GM12878 (cell line): ENCODE measurements at regions of chr2 and their contacts with region 1.

Region 1: DNA sequence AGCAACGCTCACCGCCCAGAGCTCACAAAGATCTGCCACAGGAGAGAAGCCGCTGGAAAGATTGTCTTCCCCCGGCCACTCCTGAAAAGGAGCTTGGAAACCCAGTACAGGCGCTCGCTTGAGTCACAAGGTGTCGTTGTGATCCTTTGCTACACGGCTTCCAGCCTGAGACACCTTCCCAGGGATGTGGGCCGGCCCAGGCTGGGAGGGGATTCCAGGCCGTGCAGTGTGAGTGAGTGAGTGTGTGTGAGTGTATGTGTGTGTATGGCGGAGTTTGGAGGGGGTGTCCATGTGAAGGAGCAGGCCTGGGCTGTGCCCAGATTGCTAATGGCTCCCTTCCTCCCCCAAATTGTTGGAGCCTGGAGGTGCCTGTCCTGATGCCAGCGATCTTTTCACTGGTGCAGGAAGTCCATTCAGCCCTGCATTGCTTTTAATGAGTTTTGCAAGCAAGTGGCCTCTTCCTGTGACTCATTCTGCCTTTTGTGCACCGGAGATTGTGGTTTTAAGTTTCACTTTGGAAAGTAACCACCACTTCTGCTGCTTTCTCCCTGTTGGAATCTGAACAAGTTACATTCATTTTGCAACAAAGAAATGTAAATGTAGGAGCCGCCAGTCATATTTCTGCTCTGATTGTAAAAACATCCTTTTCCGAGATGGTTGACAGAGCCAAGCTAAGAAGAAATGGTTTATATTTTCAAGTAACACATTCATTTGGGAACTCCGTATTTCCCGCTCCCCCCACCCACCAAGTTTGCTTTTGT is 83.7 kb downstream of the LPIN1 start:
- DNase-seq: peak; percentile 96
- ATAC-seq: peak; percentile 84
- H3K4me3 ChIP-seq: peak overlapping the region; percentile 38; the same call in 1 of the 2 replicates
- H3K27ac ChIP-seq: peak overlapping the region; percentile 78
- H3K4me1 ChIP-seq: peaks cover 27% of the 10 kb centered on the region
- H3K27me3 ChIP-seq: 0 out of 4 replicates have a peak, but pooled peaks cover 0 to 2% of the 10 kb centered on the region in 2 experiments
- CTCF ChIP-seq: peak in 2 of 3 experiments; percentile 7 to 58; a peak in 3 of 6 replicates
- EP300 ChIP-seq: peak; percentile 88 to 97; a peak in 3 of 4 replicates
- POLR2A ChIP-seq: no peak
- RAD21 ChIP-seq: peak; percentile 54

Region 2: DNA sequence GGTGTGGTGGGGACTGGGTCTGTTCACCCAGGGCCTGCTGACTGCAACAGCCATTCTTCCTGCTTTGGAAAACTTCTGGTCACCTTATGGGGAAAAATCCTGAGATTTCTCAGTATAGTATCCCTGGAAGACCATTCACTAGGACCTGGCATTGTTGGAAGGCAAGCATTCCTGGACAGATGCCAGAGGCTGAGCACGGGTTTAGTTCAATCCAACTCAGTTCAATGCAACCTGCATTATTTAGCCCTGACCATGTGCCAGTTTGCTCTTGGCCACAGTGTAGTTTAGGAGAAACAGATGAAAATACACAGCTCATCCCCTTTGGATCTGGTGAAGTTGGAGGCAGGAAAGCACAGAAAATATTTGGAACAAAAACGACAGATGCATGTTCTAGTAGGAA is 12.2 kb after region 1 on chr2:
- CTCF ChIA-PET with region 1: interaction called, 3 read pairs
- POLR2A ChIA-PET with region 1: no interaction called
- RAD21 ChIA-PET with region 1: interaction called, 11 read pairs
- SMC1A ChIA-PET with region 1: interaction called, 6 read pairs
- in situ Hi-C with region 1: no loop called
- intact Hi-C with region 1: no loop called
- DNase-seq: no peak
- ATAC-seq: no peak
- H3K4me3 ChIP-seq: no peak overlapping the region
- H3K27ac ChIP-seq: no peak overlapping the region
- H3K4me1 ChIP-seq: no peaks in the 10 kb centered on the region
- H3K27me3 ChIP-seq: 0 out of 4 replicates have a peak, but pooled peaks cover 0 to 2% of the 10 kb centered on the region in 2 experiments
- CTCF ChIP-seq: no peak
- EP300 ChIP-seq: no peak
- POLR2A ChIP-seq: no peak
- RAD21 ChIP-seq: no peak

Region 3: GRCh38 chr2:11852526-11853196 is 22.5 kb after region 1 on chr2:
- CTCF ChIA-PET with region 1: no interaction called
- POLR2A ChIA-PET with region 1: no interaction called
- RAD21 ChIA-PET with region 1: no interaction called
- SMC1A ChIA-PET with region 1: no interaction called
- in situ Hi-C with region 1: no loop called
- intact Hi-C with region 1: no loop called
- DNase-seq: no peak
- ATAC-seq: no peak; the same call in 2 of the 3 replicates
- H3K4me3 ChIP-seq: no peak overlapping the region
- H3K27ac ChIP-seq: no peak overlapping the region
- H3K4me1 ChIP-seq: peaks cover 7% of the 10 kb centered on the region
- H3K27me3 ChIP-seq: no peaks in the 10 kb centered on the region
- CTCF ChIP-seq: no peak
- EP300 ChIP-seq: no peak
- POLR2A ChIP-seq: no peak
- RAD21 ChIP-seq: no peak

Region 4: GRCh38 chr2:12044857-12045256 is 214.7 kb after region 1 on chr2:
- CTCF ChIA-PET with region 1: interaction called, 4 read pairs
- POLR2A ChIA-PET with region 1: interaction called, 5 read pairs
- RAD21 ChIA-PET with region 1: interaction called, 8 read pairs
- SMC1A ChIA-PET with region 1: interaction called, 3 read pairs
- in situ Hi-C with region 1: no loop called
- intact Hi-C with region 1: loop called (anchors 5 kb)
- DNase-seq: peak; percentile 83
- ATAC-seq: peak; percentile 83
- H3K4me3 ChIP-seq: peak overlapping the region; percentile 34; the same call in 1 of the 2 replicates
- H3K27ac ChIP-seq: peak overlapping the region; percentile 75
- H3K4me1 ChIP-seq: peaks cover 44% of the 10 kb centered on the region
- H3K27me3 ChIP-seq: no peaks in the 10 kb centered on the region
- CTCF ChIP-seq: peak in 1 of 3 experiments; percentile 24; a peak in 1 of 6 replicates
- EP300 ChIP-seq: 0 out of 4 replicates have a peak, but pooled peaks of 1 of the 2 experiments have one; percentile 15
- POLR2A ChIP-seq: no peak
- RAD21 ChIP-seq: no peak

Region 5: GRCh38 chr2:12282780-12283695 is 452.9 kb after region 1 on chr2:
- CTCF ChIA-PET with region 1: interaction called, 6 read pairs
- POLR2A ChIA-PET with region 1: no interaction called
- RAD21 ChIA-PET with region 1: no interaction called
- SMC1A ChIA-PET with region 1: no interaction called
- in situ Hi-C with region 1: loop called (anchors 25 kb)
- intact Hi-C with region 1: loop called (anchors 5 kb)
- DNase-seq: no peak
- ATAC-seq: peak; percentile 95
- H3K4me3 ChIP-seq: 0 out of 2 replicates have a peak overlapping the region, but pooled peaks have one; percentile 22
- H3K27ac ChIP-seq: no peak overlapping the region; the same call in 1 of the 2 replicates
- H3K4me1 ChIP-seq: peaks cover 16% of the 10 kb centered on the region
- H3K27me3 ChIP-seq: no peaks in the 10 kb centered on the region
- CTCF ChIP-seq: no peak
- EP300 ChIP-seq: peak in 1 of 2 experiments; percentile 46; a peak in 1 of 4 replicates
- POLR2A ChIP-seq: no peak
- RAD21 ChIP-seq: no peak

Region 6: GRCh38 chr2:12587729-12588522 is 757.8 kb after region 1 on chr2:
- CTCF ChIA-PET with region 1: no interaction called
- POLR2A ChIA-PET with region 1: no interaction called
- RAD21 ChIA-PET with region 1: interaction called, 4 read pairs
- SMC1A ChIA-PET with region 1: interaction called, 3 read pairs
- in situ Hi-C with region 1: no loop called
- intact Hi-C with region 1: loop called (anchors 10 kb)
- DNase-seq: peak; percentile 49
- ATAC-seq: peak; percentile 89
- H3K4me3 ChIP-seq: no peak overlapping the region
- H3K27ac ChIP-seq: no peak overlapping the region
- H3K4me1 ChIP-seq: peaks cover 19% of the 10 kb centered on the region
- H3K27me3 ChIP-seq: no peaks in the 10 kb centered on the region
- CTCF ChIP-seq: no peak
- EP300 ChIP-seq: 0 out of 4 replicates have a peak, but pooled peaks of 1 of the 2 experiments have one; percentile 51
- POLR2A ChIP-seq: no peak
- RAD21 ChIP-seq: no peak

Region 7: DNA sequence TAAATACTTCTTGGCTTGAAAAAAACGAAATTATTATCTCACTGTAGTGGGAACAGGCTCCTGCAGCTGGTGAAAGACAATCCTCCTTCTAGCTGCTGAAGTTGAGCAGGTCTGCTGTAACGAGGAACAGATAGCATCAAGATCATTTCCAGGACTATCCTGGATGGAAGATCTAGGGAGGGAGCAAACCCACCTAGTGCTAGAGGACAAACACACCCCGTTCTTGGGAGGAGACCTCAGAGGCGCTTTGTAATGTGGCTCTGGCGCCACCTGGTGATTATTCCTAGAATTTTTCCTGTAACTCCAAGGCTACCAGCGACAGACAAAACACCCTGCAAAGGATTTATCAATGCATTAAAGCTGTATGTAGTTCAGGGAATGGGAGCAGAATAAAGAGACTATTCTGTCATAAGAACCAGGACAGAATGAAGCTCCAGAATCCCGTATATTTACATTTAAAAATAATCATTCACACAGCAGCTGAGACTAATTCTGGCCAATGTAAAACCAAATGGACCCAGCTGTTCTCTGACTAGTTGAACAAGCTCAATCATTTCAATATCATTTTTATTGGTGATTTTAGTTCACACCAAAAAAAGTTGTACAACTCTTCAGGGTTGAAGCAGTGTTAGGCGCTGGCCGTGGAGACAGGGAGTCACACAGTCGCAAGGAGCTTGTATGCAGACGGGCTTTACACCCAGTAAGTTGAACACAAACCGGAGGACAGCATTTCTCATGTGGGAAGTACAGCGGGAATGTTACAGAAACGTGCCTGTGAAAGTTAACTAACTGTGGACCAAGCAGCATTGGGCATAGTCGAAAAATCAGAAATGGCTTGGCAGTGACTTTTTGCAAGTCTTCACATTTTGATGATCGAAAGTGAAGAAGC is 1176.9 kb after region 1 on chr2:
- CTCF ChIA-PET with region 1: interaction called, 62 read pairs
- POLR2A ChIA-PET with region 1: no interaction called
- RAD21 ChIA-PET with region 1: interaction called, 34 read pairs
- SMC1A ChIA-PET with region 1: interaction called, 42 read pairs
- in situ Hi-C with region 1: loop called (anchors 5 kb)
- intact Hi-C with region 1: loop called (anchors 1 kb)
- DNase-seq: no peak
- ATAC-seq: peak; percentile 93
- H3K4me3 ChIP-seq: no peak overlapping the region
- H3K27ac ChIP-seq: no peak overlapping the region
- H3K4me1 ChIP-seq: no peaks in the 10 kb centered on the region
- H3K27me3 ChIP-seq: no peaks in the 10 kb centered on the region; a peak in 1 of 4 replicates
- CTCF ChIP-seq: peak; percentile 65 to 78 (median 69)
- EP300 ChIP-seq: no peak
- POLR2A ChIP-seq: no peak
- RAD21 ChIP-seq: peak; percentile 75